PC-3 (cell line): ENCODE measurements at regions of chr10 and their contacts with region 1.

Region 1: GRCh38 chr10:77983384-77984341 is 45.7 kb downstream of the POLR3A start:
- DNase-seq: peak; percentile 98
- ATAC-seq: peak; percentile 98
- H3K4me3 ChIP-seq: no peak overlapping the region
- H3K27ac ChIP-seq: peak overlapping the region; percentile 42
- H3K4me1 ChIP-seq: peaks cover 23% of the 10 kb centered on the region
- H3K27me3 ChIP-seq: no peaks in the 10 kb centered on the region
- CTCF ChIP-seq: peak; percentile 24; the same call in 1 of the 2 replicates

Region 2: GRCh38 chr10:77909749-77910375 is 73.8 kb before region 1 on chr10:
- CTCF ChIA-PET with region 1: no interaction called
- POLR2A ChIA-PET with region 1: no interaction called
- intact Hi-C with region 1: loop called (anchors 2 kb)
- DNase-seq: peak; percentile 78
- ATAC-seq: 0 out of 2 replicates have a peak, but pooled peaks have one; percentile 6
- H3K4me3 ChIP-seq: no peak overlapping the region
- H3K27ac ChIP-seq: peak overlapping the region; percentile 8
- H3K4me1 ChIP-seq: peaks cover 25% of the 10 kb centered on the region
- H3K27me3 ChIP-seq: no peaks in the 10 kb centered on the region
- CTCF ChIP-seq: no peak

Region 3: GRCh38 chr10:77926566-77927401 is 56.9 kb before region 1 on chr10 and contains the start of gene DLG5:
- CTCF ChIA-PET with region 1: interaction called, 7 read pairs
- POLR2A ChIA-PET with region 1: no interaction called
- intact Hi-C with region 1: loop called (anchors 2 kb)
- DNase-seq: peak; percentile 89
- ATAC-seq: peak; percentile 77
- H3K4me3 ChIP-seq: peak within 1 kb of the TSS; percentile 74
- H3K27ac ChIP-seq: no peak within 1 kb of the TSS
- H3K4me1 ChIP-seq: peaks cover 39% of the 10 kb centered on the region
- H3K27me3 ChIP-seq: no peaks in the 10 kb centered on the region
- CTCF ChIP-seq: peak; percentile 34; the same call in 1 of the 2 replicates
- total RNA-seq, gene DLG5: 118 and 158 TPM in 2 replicates

Region 4: DNA sequence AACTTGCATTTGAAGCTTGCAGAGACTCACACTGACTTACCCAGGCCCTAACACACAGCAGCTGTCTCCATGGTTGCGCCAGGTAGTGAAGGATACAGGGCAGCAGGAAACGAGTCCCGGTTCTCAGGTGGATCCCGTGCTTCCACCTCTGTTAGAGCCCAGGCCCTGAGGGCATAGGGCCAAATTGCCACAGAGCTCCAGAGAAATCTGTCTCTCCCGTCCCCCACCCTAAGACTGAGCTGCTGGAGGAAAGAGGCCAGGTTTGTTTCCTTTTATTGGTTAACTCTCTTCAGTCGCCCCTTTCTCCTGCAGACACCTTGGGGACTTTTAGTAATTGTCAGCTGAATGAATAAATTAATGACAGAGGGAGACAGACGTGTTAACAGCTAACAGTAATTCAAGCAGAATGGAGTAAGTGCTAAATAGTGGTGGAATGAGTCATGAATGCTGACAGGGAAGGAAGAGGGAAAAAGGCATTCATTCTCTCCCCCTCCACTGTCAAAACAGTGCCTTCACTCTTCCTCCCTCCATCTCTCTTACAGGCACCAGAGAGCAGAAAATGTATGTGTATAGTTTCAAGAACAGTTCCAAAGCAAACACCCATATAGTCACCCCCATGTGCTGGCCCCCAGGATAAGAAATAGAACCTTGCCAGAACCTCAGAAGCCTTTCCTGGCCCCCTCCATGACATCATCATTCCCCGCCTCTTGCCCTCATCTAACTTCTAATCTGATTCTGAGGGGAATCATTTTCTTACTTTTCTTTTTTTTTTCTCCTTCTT is 40.4 kb before region 1 on chr10:
- CTCF ChIA-PET with region 1: interaction called, 4 read pairs
- POLR2A ChIA-PET with region 1: no interaction called
- intact Hi-C with region 1: loop called (anchors 1 kb)
- DNase-seq: peak; percentile 99
- ATAC-seq: peak; percentile 69
- H3K4me3 ChIP-seq: peak overlapping the region; percentile 4; the same call in 1 of the 2 replicates
- H3K27ac ChIP-seq: peak overlapping the region; percentile 72
- H3K4me1 ChIP-seq: peaks cover 32% of the 10 kb centered on the region
- H3K27me3 ChIP-seq: no peaks in the 10 kb centered on the region
- CTCF ChIP-seq: no peak

Region 5: DNA sequence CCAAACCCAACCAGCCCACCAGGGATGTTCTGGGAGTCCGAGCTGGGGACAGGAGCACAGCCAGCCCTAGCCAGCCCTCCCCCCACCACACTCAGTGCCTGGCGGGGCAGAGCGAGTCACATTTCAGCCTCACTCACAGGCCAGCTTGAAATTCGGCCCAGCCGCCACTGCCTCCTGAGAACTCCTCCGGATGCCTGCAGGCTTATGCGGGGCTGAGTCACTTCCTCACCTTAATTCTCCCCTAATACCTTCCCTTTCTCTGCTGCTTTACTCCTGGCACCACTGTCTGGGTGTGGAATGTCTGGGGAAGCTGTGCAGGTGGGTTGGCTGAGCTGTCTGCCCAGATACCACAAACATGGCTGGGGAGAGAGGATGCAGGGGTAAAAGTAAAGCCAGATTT is 34.5 kb before region 1 on chr10:
- CTCF ChIA-PET with region 1: interaction called, 5 read pairs
- POLR2A ChIA-PET with region 1: interaction called, 3 read pairs
- intact Hi-C with region 1: loop called (anchors 1 kb)
- DNase-seq: peak; percentile 100
- ATAC-seq: peak; percentile 94
- H3K4me3 ChIP-seq: peak overlapping the region; percentile 3; the same call in 1 of the 2 replicates
- H3K27ac ChIP-seq: peak overlapping the region; percentile 69
- H3K4me1 ChIP-seq: peaks cover 36% of the 10 kb centered on the region
- H3K27me3 ChIP-seq: no peaks in the 10 kb centered on the region
- CTCF ChIP-seq: no peak

Region 6: DNA sequence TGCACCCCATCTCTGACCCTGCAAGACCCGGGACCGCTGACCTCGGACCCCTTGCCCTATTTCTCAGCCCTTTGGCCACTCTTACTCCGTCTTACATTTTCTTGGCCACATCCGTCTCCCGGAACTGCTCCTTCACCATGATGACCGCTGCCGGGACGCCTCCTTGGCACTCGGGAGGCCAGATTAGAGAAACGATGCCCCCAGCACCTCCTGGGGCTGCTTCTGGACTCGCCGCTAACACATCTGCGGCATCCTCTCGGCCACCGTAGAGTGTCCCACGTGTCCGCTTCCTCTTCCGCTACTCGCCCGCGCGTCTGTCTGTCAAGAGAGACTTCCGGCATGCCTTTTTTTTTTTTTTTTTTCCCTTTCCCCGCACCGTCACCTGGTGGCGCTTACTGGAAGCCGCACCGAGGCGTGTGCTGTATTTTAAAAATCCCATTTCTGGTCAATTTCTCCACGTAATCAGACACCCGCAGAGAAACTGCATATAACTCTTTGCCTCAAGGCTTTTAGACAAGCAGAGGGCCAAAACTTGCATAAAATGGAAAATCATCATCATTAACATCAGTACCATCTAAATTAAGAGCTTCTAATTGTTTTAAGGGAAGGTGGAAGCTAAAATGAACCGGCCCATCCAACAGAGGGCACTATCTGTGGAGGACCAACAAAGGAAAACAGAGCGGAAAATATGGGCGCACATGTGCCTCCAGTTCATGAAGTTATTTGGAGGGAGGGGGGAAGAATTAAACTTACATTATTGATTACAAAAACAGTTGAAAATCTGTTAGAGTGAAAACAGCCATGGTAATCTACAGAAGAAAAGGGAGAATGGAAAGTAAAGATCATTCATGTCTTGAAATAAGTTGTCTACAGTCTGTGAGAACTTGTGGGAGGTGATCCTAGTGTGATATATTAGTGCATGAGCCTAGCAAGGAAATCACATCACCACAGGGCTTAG is 45.9 kb after region 1 on chr10 and contains the start of gene POLR3A:
- CTCF ChIA-PET with region 1: interaction called, 9 read pairs
- POLR2A ChIA-PET with region 1: no interaction called
- intact Hi-C with region 1: loop called (anchors 2 kb)
- DNase-seq: peak; percentile 100
- ATAC-seq: peak; percentile 48
- H3K4me3 ChIP-seq: peak within 1 kb of the TSS; percentile 69
- H3K27ac ChIP-seq: peak within 1 kb of the TSS; percentile 23
- H3K4me1 ChIP-seq: peaks cover 47% of the 10 kb centered on the region
- H3K27me3 ChIP-seq: no peaks in the 10 kb centered on the region
- CTCF ChIP-seq: peak; percentile 100
- total RNA-seq, gene POLR3A: 97.0 and 97.2 TPM in 2 replicates